Mammary epithelial cell (primary cell): ENCODE measurements at regions of chr20 and their contacts with region 1.

Region 1: GRCh38 chr20:19974626-19975435 is 42.3 kb upstream of the NAA20 start:
- DNase-seq: peak; percentile 91
- H3K4me3 ChIP-seq: peak overlapping the region; percentile 68 to 92 (median 86)
- H3K27ac ChIP-seq: peak overlapping the region; percentile 94
- H3K4me1 ChIP-seq: peaks cover 34% of the 10 kb centered on the region
- H3K27me3 ChIP-seq: no peaks in the 10 kb centered on the region
- CTCF ChIP-seq: no peak

Region 2: DNA sequence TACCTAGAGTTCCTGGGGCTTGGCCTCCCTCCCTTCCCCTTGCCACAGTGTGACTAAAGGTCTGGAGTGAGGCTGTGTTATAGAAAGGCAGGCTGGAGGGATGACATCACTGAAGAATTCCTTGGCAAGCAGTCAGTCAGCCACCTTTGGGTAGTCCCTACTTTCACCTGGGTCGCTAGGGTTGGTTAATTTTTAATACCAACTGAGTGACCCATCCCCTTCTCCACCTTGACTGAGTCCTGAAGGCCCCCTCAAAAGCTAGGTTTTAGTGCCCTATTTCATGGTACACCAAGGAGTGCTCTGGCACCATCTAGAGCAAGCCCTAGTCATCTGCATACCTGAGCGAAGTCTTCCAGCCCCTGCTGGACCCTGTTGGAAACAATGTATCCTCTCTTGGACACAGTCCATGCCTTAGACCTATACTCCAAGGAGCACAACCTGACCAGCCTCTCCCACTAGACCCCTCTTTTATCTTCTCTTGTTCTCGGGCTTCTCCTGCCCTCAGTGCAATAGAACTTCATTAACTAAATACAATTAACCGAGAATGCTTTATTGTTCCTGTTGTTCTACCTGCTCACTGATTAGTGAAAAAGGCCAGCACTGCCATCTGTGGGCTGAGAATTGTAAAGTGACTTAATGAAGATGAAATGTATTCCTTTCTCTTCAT is 172.2 kb before region 1 on chr20:
- CTCF ChIA-PET with region 1: no interaction called
- dilution Hi-C with region 1: loop called (anchors 5 kb)
- in situ Hi-C with region 1: no loop called
- intact Hi-C with region 1: no loop called
- DNase-seq: peak; percentile 89
- H3K4me3 ChIP-seq: no peak overlapping the region
- H3K27ac ChIP-seq: peak overlapping the region; percentile 43
- H3K4me1 ChIP-seq: peaks cover 26% of the 10 kb centered on the region
- H3K27me3 ChIP-seq: no peaks in the 10 kb centered on the region
- CTCF ChIP-seq: peak; percentile 39 to 43

Region 3: GRCh38 chr20:19889011-19889953 is 85.5 kb before region 1 on chr20:
- CTCF ChIA-PET with region 1: interaction called, 3 read pairs
- dilution Hi-C with region 1: no loop called
- in situ Hi-C with region 1: no loop called
- intact Hi-C with region 1: loop called (anchors 1 kb)
- DNase-seq: peak; percentile 56
- H3K4me3 ChIP-seq: peak overlapping the region; percentile 25 to 39 (median 31)
- H3K27ac ChIP-seq: peak overlapping the region; percentile 64
- H3K4me1 ChIP-seq: peaks cover 59% of the 10 kb centered on the region
- H3K27me3 ChIP-seq: no peaks in the 10 kb centered on the region
- CTCF ChIP-seq: no peak

Region 4: GRCh38 chr20:19928328-19929011 is 46.4 kb before region 1 on chr20:
- CTCF ChIA-PET with region 1: no interaction called
- dilution Hi-C with region 1: no loop called
- in situ Hi-C with region 1: no loop called
- intact Hi-C with region 1: loop called (anchors 1 kb)
- DNase-seq: peak; percentile 97
- H3K4me3 ChIP-seq: no peak overlapping the region
- H3K27ac ChIP-seq: peak overlapping the region; percentile 80
- H3K4me1 ChIP-seq: peaks cover 26% of the 10 kb centered on the region
- H3K27me3 ChIP-seq: no peaks in the 10 kb centered on the region
- CTCF ChIP-seq: no peak

Region 5: GRCh38 chr20:19944772-19945459 is 29.9 kb before region 1 on chr20:
- CTCF ChIA-PET with region 1: no interaction called
- dilution Hi-C with region 1: loop called (anchors 5 kb)
- in situ Hi-C with region 1: no loop called
- intact Hi-C with region 1: no loop called
- DNase-seq: peak; percentile 50
- H3K4me3 ChIP-seq: no peak overlapping the region
- H3K27ac ChIP-seq: no peak overlapping the region
- H3K4me1 ChIP-seq: peaks cover 19% of the 10 kb centered on the region
- H3K27me3 ChIP-seq: no peaks in the 10 kb centered on the region
- CTCF ChIP-seq: no peak

Region 6: DNA sequence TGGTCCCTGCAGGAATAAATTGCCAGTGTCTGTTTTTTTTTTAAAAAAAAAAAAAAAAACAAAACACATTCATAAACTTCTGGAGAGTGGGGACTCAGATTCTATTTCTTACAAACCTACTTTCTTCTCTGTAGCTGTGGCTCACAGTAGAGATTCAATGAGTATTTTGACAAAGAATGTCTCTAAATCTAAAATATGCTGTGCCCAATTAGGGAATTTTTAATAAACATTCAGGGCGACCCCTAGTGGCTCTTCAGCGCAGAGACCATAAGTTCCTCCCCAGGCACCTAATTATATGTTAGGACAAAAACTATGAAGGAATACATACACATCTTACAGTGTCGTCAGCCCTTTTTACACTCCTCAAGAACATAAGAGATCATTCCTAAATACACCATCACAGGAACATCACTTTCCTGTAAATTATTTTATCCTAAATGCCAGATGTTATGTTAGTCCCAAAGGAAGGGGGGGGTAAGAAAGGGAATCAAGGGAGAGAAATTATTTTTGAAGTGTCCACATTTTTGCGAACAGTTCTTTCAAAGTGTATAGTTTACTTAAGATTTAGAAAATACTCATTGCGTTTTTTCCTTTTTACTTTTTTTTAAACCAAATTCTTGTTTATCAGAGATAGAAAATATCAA is 20.5 kb after region 1 on chr20:
- CTCF ChIA-PET with region 1: interaction called, 6 read pairs
- dilution Hi-C with region 1: no loop called
- in situ Hi-C with region 1: no loop called
- intact Hi-C with region 1: loop called (anchors 1 kb)
- DNase-seq: no peak
- H3K4me3 ChIP-seq: no peak overlapping the region
- H3K27ac ChIP-seq: peak overlapping the region; percentile 100
- H3K4me1 ChIP-seq: peaks cover 52% of the 10 kb centered on the region
- H3K27me3 ChIP-seq: no peaks in the 10 kb centered on the region
- CTCF ChIP-seq: peak; percentile 70 to 80

Region 7: DNA sequence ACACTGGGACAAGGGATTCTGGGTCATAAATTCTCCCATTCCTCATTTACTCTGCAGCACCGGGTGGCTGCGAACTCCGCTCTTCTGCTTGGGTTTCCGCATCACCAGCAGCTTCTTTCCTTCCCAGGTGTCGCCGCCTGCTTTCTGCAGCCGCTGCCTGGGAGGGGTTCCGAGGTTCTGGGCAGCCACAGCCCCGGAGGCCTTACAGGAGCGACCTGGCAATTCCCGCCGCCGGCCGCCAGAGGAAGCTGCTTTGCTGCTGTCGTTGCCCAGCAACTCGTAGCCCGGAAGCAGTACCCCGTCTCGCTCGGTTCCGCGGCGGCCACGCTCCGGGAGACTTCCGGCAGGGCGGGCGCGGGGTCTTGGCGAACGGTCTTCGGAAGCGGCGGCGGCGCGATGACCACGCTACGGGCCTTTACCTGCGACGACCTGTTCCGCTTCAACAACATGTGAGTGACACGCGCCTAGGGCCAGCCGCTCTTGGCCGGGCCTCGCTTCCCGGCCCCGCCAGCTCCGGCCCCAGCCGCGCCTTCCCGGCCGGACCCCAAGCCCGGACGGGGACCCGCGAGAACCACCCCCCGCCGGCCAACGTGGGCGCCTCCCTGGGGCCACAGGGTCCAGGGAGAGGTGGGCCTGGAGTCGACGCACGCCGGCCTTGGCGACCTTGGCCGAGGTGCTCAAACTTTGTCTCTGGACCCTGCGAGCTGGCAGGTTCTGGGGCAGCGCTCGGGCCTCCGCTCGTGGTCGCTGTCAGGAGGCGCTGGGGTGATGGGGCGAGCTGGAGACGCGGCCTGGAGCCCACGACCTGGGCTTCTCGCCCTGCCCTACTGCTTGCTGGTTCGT is 42.4 kb after region 1 on chr20 and contains the start of gene NAA20:
- CTCF ChIA-PET with region 1: no interaction called
- dilution Hi-C with region 1: no loop called
- in situ Hi-C with region 1: no loop called
- intact Hi-C with region 1: no loop called
- DNase-seq: peak; percentile 86
- H3K4me3 ChIP-seq: peak within 1 kb of the TSS; percentile 87 to 100 (median 97)
- H3K27ac ChIP-seq: peak within 1 kb of the TSS; percentile 82
- H3K4me1 ChIP-seq: peaks cover 21% of the 10 kb centered on the region
- H3K27me3 ChIP-seq: no peaks in the 10 kb centered on the region
- CTCF ChIP-seq: peak; percentile 48 to 77
- total RNA-seq, gene NAA20: 44.3 to 105 TPM